Psoas muscle (tissue), 8 donors: ENCODE measurements at regions of chr12 and their contacts with region 1.

Region 1: DNA sequence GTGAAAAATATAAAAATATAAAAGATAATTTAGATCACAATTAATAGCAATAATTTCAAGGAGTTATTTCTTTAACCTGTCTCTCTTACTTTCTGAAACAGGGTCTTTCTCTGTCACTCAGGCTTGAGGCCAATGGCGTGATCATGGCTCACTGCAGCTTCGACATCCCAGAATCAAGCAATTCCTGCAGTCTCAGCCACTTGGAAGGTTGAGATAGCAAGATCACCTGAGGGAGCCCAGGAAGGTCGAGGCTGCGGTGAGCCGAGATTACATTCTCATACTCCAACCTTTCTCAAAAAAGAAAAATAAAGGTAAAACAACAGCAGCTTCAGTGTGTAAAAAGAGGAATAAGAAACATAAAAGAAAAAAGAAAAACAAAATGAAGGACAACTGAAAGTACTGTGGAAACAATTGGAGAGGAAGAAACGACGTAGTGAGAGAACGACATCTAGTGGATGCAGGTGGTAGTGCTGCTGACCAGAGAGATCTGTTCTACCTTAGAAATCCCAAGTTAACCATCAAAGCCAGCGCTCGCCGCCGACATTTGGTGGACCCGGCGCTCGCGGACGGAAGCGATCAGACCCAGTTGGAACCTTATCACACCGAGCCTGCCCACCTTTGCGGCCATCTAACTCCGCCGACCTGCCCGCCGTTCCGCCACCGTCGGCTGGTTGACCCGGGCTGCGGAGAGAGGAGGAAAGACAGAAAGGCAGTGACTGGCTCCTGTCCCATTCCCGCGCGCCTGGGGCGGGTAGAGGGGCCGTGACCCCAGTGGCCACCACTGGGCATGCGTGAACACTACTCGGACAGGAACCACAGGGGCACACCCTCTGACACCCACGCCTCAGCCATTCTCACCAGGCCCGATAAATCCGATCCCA is 196.1 kb downstream of the ALG10 start:
- DNase-seq: peak in 1 of 2 donors; percentile 38
- ATAC-seq: peak in 3 of 4 donors; percentile 51 to 74 (median 71)
- H3K4me3 ChIP-seq: peak overlapping the region; percentile 58
- H3K27ac ChIP-seq: no peak overlapping the region
- H3K4me1 ChIP-seq: no peaks in the 10 kb centered on the region
- H3K27me3 ChIP-seq: peaks cover 0 to 10% (median 8%) of the 10 kb centered on the region in 3 donors
- CTCF ChIP-seq: peak; percentile 85

Region 2: DNA sequence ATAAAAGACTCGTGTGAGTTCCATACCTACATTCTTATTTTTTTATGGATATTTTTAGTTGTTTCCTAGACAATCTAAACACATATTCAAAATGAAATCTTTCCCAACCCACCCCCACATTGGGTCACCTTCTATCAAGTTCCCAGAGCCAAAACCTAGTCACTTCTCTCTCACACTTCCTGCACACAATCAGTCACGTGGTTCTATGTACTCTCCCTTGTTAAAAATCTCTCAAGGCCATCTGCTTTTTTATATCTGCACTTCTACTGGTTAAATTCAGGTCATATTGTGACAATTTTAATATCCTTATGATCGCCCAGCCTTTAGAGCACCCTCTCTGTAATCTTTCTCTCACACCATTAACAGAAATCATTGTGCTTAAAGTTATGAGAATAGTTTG is 603.8 kb before region 1 on chr12:
- intact Hi-C with region 1: no loop called
- DNase-seq: no peak
- ATAC-seq: no peak
- H3K4me3 ChIP-seq: no peak overlapping the region
- H3K27ac ChIP-seq: no peak overlapping the region
- H3K4me1 ChIP-seq: no peaks in the 10 kb centered on the region
- H3K27me3 ChIP-seq: peaks cover 0 to 1% (median 0%) of the 10 kb centered on the region in 3 donors
- CTCF ChIP-seq: no peak

Region 3: GRCh38 chr12:34121360-34121759 is 97.0 kb before region 1 on chr12:
- intact Hi-C with region 1: loop called (anchors 5 kb)
- DNase-seq: no peak
- ATAC-seq: no peak
- H3K4me3 ChIP-seq: no peak overlapping the region
- H3K27ac ChIP-seq: no peak overlapping the region
- H3K4me1 ChIP-seq: no peaks in the 10 kb centered on the region
- H3K27me3 ChIP-seq: no peaks in the 10 kb centered on the region
- CTCF ChIP-seq: no peak

Region 4: DNA sequence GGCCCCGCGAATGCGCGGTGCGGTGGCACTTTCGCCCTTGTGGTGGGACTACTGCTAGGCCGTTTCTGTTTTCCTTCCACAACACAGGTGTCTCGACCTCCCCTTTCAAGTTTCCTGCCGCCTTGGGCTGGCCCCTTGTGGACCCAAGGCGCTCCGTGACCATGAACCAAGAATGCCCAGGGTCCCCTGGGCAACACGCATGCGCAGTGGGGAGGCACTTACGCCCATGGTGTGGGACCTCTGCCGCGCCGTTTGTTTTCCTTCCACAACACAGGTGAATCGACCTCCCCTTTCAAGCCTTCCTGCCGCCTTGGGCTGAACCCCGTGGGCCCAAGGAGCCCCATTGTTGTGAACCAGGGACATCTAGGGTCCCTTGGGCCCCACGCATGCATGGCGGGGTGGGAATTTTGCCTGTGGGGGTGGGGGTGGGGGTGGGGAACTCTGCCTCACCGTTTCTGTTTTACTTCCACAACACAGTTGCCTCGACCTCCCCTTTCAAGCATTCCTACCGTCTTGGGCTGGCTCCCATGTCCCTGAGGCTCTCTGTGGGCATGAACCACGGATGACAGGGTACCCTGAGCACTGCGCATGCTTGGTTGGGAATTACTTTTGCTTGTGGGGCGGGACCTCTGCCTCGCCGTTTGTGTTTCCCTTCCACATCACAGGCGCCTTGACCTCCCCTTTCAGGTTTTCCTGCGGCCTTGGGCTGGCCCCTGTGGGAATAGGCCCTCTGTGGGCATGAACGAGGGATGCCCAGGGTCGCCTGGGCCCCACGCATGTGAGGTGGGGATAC is 159.0 kb after region 1 on chr12:
- intact Hi-C with region 1: no loop called
- DNase-seq: no peak
- ATAC-seq: no peak
- H3K4me3 ChIP-seq: no peak overlapping the region
- H3K27ac ChIP-seq: no peak overlapping the region
- H3K4me1 ChIP-seq: no peaks in the 10 kb centered on the region
- H3K27me3 ChIP-seq: no peaks in the 10 kb centered on the region
- CTCF ChIP-seq: no peak